GM18951 (cell line): ENCODE measurements at regions of chr5 and their contacts with region 1.

Region 1: GRCh38 chr5:58849921-58850667 is 267.2 kb downstream of the RAB3C start:
- POLR2A ChIP-seq: no peak

Region 2: DNA sequence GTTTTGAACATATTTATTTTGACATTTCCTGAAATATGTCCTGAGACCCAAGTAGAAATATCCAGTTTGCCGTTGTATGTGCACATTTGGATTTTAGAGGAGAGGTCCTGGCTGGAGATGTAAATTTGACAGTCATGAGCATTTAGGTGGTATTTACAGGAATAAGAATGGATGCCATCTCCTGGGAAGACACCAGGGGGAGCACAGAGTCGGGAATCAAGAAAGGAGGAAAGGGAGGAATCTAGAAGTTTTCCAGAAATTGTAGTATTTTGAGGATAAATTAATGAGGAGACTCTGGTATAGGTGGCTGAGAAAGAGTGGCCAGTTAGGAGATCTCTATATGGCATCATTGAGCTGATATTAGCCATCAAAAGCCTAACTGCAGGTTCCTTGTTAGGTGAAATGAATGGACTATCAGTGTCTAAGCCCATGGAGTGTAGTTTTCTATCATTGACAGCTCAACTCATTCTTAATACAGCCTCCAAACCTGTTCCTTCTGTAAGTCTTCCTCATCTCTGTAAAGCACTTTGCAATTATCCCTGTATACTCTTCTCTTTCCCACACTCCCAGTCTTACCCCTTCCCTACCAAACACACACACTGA is 351.7 kb before region 1 on chr5:
- in situ Hi-C with region 1: loop called (anchors 25 kb)
- POLR2A ChIP-seq: no peak

Region 3: DNA sequence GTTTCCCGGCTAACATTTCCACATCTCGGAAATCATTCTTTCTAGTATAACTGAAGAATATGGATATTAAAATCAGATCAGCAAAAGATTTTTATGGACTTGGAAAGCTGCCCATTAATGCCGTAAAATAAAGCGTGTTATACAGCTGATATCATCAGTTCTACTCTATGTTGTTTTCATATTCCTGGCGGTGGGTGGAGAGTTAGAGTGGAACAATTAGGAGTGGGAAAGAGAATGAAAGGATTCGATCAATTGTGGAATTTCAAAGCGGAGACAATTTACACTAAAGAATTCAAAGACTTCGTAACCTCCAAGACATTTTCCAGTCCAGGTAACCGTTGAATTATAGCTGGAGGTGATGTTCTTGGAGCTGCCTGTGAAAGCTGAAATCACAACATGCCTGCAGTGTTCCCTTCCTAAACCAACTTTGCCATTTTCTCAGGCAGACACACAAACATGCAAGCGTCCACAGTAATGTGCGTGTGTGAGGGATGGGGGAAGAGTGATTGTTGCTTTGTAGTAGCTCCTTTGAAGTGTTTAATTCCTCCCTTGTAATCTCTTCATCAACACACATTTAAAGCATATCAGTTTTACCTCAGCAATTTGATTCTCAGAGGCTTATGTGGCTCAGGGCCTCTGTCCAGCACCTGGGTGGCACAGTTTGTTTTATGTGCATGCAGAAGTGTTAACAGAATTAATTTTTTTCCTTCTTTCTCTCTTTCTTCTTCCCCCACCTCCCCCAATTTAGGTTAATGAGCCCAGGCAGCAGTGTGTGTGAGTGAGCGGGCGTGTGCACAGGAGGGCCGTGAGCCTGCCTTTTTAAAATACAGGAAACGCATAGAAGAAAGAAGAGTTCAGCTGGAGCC is 276.8 kb after region 1 on chr5:
- in situ Hi-C with region 1: no loop called
- POLR2A ChIP-seq: no peak

Region 4: GRCh38 chr5:59436364-59437148 is 586.5 kb after region 1 on chr5:
- in situ Hi-C with region 1: no loop called
- POLR2A ChIP-seq: no peak